CD8-positive, alpha-beta T cell (primary cell): ENCODE measurements at regions of chr10 and their contacts with region 1.

Region 1: GRCh38 chr10:97234400-97234799 is 48.6 kb upstream of the SLIT1 start:
- DNase-seq: peak in 2 of 9 experiments; percentile 17 to 33
- ATAC-seq: no peak
- H3K4me3 ChIP-seq: no peak overlapping the region
- H3K4me3 Mint-ChIP-seq: no peak overlapping the region
- H3K27ac ChIP-seq: no peak overlapping the region
- H3K27ac Mint-ChIP-seq: no peak overlapping the region
- H3K4me1 ChIP-seq: no peaks in the 10 kb centered on the region
- H3K4me1 Mint-ChIP-seq: no peaks in the 10 kb centered on the region
- H3K27me3 ChIP-seq: no peaks in the 10 kb centered on the region
- H3K27me3 Mint-ChIP-seq: no peaks in the 10 kb centered on the region
- CTCF ChIP-seq: peak; percentile 45

Region 2: GRCh38 chr10:97222326-97222961 is 12.0 kb before region 1 on chr10:
- CTCF ChIA-PET with region 1: interaction called, 13 read pairs
- POLR2A ChIA-PET with region 1: interaction called, 3 read pairs
- intact Hi-C with region 1: no loop called
- DNase-seq: no peak
- ATAC-seq: no peak
- H3K4me3 ChIP-seq: no peak overlapping the region
- H3K4me3 Mint-ChIP-seq: no peak overlapping the region
- H3K27ac ChIP-seq: no peak overlapping the region
- H3K27ac Mint-ChIP-seq: no peak overlapping the region
- H3K4me1 ChIP-seq: no peaks in the 10 kb centered on the region
- H3K4me1 Mint-ChIP-seq: no peaks in the 10 kb centered on the region
- H3K27me3 ChIP-seq: no peaks in the 10 kb centered on the region
- H3K27me3 Mint-ChIP-seq: no peaks in the 10 kb centered on the region
- CTCF ChIP-seq: no peak